Stomach (tissue), 19 donors: ENCODE measurements at regions of chr11 and their contacts with region 1.

Region 1: GRCh38 chr11:12893787-12894672 is 115.1 kb upstream of the RASSF10 start:
- DNase-seq: peak; percentile 69 to 78
- H3K4me3 ChIP-seq: no peak overlapping the region
- H3K27ac ChIP-seq: peak overlapping the region in 3 of 5 donors; percentile 4 to 82 (median 39)
- H3K4me1 ChIP-seq: peaks cover 4 to 53% (median 18%) of the 10 kb centered on the region in 4 donors
- H3K27me3 ChIP-seq: no peaks in the 10 kb centered on the region
- CTCF ChIP-seq: peak in 5 of 7 experiments; percentile 57 to 95 (median 88)
- EP300 ChIP-seq: no peak
- POLR2A ChIP-seq: no peak

Region 2: GRCh38 chr11:12331239-12331874 is 562.7 kb before region 1 on chr11:
- intact Hi-C with region 1: loop called (anchors 5 kb)
- DNase-seq: peak; percentile 86 to 95
- H3K4me3 ChIP-seq: no peak overlapping the region
- H3K27ac ChIP-seq: peak overlapping the region in 3 of 5 donors; percentile 5 to 71 (median 21)
- H3K4me1 ChIP-seq: peaks cover 0 to 9% (median 4%) of the 10 kb centered on the region in 4 donors
- H3K27me3 ChIP-seq: no peaks in the 10 kb centered on the region
- CTCF ChIP-seq: peak in 5 of 7 experiments; percentile 48 to 79 (median 77)
- EP300 ChIP-seq: no peak
- POLR2A ChIP-seq: no peak

Region 3: DNA sequence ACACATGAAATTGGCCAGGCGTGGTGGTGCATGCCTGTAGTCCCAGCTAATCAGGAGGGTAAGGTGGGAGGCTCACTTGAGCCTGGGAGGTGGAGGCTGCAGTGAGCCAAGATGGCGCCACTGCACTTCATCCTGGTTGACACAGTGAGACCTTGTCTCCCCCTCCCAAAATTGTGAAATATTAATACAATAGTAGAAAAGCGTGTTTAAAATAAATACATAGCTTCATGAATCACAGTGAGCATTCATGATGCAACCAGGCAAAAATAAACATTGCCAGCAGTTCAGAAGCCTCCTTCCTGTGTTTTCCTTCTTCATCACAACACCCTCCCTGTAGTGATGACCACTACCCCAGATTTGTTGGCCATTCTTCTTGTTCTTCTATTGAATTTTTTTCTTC is 224.1 kb before region 1 on chr11:
- intact Hi-C with region 1: loop called (anchors 10 kb)
- DNase-seq: no peak
- H3K4me3 ChIP-seq: no peak overlapping the region
- H3K27ac ChIP-seq: no peak overlapping the region
- H3K4me1 ChIP-seq: peaks cover 0 to 10% (median 4%) of the 10 kb centered on the region in 4 donors
- H3K27me3 ChIP-seq: peaks cover 0 to 11% (median 0%) of the 10 kb centered on the region in 3 donors
- CTCF ChIP-seq: no peak
- EP300 ChIP-seq: no peak
- POLR2A ChIP-seq: no peak